ENCODE measurements at regions of chr1 and their contacts with region 1.

Region 1: GRCh38 chr1:179081687-179082332 is at the start of gene TOR3A:
- DNase-seq: peak; percentile 54
- ATAC-seq: peak; percentile 95
- H3K4me3 ChIP-seq: peak within 1 kb of the TSS; percentile 74 to 85
- H3K27ac ChIP-seq: peak within 1 kb of the TSS; percentile 91
- H3K4me1 ChIP-seq: peaks cover 5% of the 10 kb centered on the region; the same call in 1 of the 2 replicates
- H3K27me3 ChIP-seq: no peaks in the 10 kb centered on the region
- CTCF ChIP-seq: no peak
- total RNA-seq, gene TOR3A: 51.5 TPM

Region 2: DNA sequence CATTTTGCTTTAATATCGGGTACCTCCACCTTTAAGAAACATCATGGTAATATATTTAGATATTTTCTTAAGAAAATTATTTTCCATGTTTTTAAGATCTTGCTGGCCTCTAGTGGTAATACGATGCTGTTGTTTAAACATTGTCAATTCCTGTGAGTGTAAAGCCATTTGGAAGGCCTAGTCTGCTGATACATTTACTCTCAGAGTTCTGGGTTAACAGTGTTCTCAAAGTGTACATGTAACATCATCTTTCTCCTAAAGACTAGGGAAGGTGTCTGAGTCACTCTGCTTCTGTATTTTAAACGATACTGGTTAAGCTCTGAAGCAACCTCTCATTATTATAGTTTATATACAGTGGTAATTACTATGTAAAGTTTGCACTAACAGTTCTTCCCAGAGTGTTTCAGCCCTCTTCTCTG is 798.9 kb before region 1 on chr1:
- CTCF ChIA-PET with region 1: no interaction called
- POLR2A ChIA-PET with region 1: no interaction called
- in situ Hi-C with region 1: no loop called
- intact Hi-C with region 1: no loop called
- DNase-seq: no peak
- ATAC-seq: peak; percentile 80
- H3K4me3 ChIP-seq: no peak overlapping the region
- H3K27ac ChIP-seq: peak overlapping the region; percentile 53; the same call in 1 of the 2 replicates
- H3K4me1 ChIP-seq: peaks cover 17% of the 10 kb centered on the region
- H3K27me3 ChIP-seq: no peaks in the 10 kb centered on the region
- CTCF ChIP-seq: peak; percentile 65; the same call in 1 of the 2 replicates

Region 3: DNA sequence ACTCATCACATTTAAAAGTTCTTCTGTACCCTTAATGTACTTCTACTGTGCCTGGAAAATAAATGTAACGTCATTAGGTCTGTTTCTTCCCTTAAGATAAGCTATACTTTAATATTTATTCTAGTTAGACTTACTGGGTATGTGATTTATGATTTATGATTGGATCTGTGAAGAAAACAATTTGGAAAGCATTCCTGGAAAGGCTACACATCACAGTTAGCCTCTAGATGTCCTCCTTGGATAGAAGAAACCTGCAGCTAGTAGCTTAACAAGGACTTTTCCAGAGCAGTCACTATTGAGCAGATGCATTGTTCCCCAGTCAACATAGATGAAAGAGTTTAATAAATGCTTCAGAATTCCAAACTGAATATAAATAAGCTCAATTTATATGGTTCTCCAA is 169.9 kb after region 1 on chr1:
- CTCF ChIA-PET with region 1: no interaction called
- POLR2A ChIA-PET with region 1: interaction called, 11 read pairs
- in situ Hi-C with region 1: no loop called
- intact Hi-C with region 1: no loop called
- DNase-seq: peak; percentile 38
- ATAC-seq: peak; percentile 85; the same call in 1 of the 2 replicates
- H3K4me3 ChIP-seq: no peak overlapping the region
- H3K27ac ChIP-seq: no peak overlapping the region
- H3K4me1 ChIP-seq: no peaks in the 10 kb centered on the region
- H3K27me3 ChIP-seq: no peaks in the 10 kb centered on the region
- CTCF ChIP-seq: no peak; the same call in 1 of the 2 replicates

Measured in Panc1 (cell line).